ENCODE measurements at regions of chr3 and their contacts with region 1.

Region 1: DNA sequence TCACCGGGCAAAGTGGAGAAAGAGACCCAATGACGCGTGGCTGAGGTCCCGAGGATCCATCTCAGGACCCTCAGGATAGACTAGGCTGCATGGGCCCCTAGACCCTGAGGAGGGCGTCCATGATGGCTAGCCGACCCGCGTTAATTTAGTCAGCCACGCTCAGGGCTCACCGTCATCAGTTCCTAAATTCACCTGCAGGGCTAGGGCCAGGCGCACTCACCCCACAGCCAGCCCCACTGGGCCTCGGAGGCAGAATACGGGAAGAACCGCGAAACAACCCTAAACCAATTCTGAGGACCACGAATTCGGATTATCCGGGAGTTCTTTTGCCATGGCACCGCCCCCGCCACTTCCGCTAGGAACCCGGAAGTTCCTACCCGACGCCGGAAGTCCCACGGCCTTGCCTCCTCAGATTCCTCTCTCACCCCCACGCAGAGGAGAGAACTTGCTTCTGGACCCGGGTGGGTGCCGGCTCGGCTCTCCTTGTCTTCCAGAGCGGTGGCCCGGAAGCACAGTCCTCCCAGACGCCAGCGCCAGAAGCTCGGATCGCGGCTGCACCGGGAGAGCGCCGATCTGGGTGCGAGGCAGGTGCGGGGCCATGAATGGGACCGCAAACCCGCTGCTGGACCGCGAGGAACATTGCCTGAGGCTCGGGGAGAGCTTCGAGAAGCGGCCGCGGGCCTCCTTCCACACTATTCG is at the starts of genes EAF1 and METTL6:
- DNase-seq: peak; percentile 71 to 85 (median 84)
- ATAC-seq: peak; percentile 89
- H3K4me3 ChIP-seq: peak within 1 kb of the TSS; percentile 81
- H3K4me3 Mint-ChIP-seq: peak within 1 kb of the TSS; percentile 91 to 100 (median 98)
- H3K27ac ChIP-seq: peak within 1 kb of the TSS; percentile 91
- H3K27ac Mint-ChIP-seq: peak within 1 kb of the TSS; percentile 86 to 99 (median 94)
- H3K4me1 ChIP-seq: peaks cover 18 to 23% of the 10 kb centered on the region in 2 donors
- H3K4me1 Mint-ChIP-seq: peaks cover 47 to 82% (median 62%) of the 10 kb centered on the region in 7 donors
- H3K27me3 ChIP-seq: no peaks in the 10 kb centered on the region
- H3K27me3 Mint-ChIP-seq: no peaks in the 10 kb centered on the region
- total RNA-seq, gene EAF1: 17.8 to 61.9 (median 27.8) TPM
- total RNA-seq, gene METTL6: 7.9 to 23.0 (median 18.3) TPM

Region 2: DNA sequence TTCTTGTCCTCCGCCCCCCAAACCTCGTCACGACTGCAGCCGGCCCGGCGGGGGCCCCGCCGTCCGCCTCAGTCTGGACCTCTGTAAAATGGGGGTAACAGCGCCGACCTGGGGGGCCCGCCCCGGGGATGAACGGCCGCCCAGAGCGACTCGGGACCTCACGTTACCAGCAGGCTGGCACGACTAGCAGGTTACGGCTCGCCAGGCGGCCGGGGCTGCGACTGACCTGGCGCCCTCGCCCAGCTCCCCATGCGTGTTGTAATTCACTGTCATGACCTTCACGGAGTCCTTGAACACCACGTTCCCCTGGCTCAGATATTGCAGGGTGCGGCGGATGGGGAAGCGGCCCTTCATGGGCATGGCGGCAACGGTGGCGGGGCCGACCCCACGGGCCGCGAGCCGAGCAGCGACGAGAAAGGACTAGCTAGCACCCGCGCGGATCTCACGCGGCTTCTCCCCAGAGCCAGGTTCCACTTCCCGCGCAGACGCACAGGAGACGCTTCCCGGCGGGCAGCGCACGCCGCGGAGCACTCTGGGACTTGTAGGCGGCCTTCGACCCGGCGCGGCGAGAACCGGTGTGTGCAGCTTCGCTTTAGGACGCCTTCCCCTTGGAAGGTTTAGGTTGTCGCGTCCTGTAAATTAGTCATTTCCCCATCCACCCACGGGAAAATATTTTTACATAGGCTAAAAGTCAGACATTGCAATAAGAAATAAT is 362.3 kb before region 1 on chr3 and contains the start of gene MRPS25:
- CTCF ChIA-PET with region 1: no interaction called
- POLR2A ChIA-PET with region 1: no interaction called
- intact Hi-C with region 1: loop called in 1 of 2 experiments (anchors 1 kb)
- DNase-seq: peak; percentile 80 to 90 (median 87)
- ATAC-seq: peak; percentile 99
- H3K4me3 ChIP-seq: peak within 1 kb of the TSS; percentile 86
- H3K4me3 Mint-ChIP-seq: peak within 1 kb of the TSS; percentile 94 to 98 (median 96)
- H3K27ac ChIP-seq: peak within 1 kb of the TSS; percentile 87
- H3K27ac Mint-ChIP-seq: peak within 1 kb of the TSS; percentile 87 to 99 (median 94)
- H3K4me1 ChIP-seq: peaks cover 7 to 14% of the 10 kb centered on the region in 2 donors
- H3K4me1 Mint-ChIP-seq: peaks cover 16 to 29% (median 22%) of the 10 kb centered on the region in 7 donors
- H3K27me3 ChIP-seq: no peaks in the 10 kb centered on the region
- H3K27me3 Mint-ChIP-seq: no peaks in the 10 kb centered on the region
- total RNA-seq, gene MRPS25: 57.6 to 104 (median 76.0) TPM

Region 3: GRCh38 chr3:15467227-15468181 is 40.2 kb after region 1 on chr3:
- CTCF ChIA-PET with region 1: no interaction called
- POLR2A ChIA-PET with region 1: no interaction called
- intact Hi-C with region 1: no loop called
- DNase-seq: no peak
- ATAC-seq: peak; percentile 57
- H3K4me3 ChIP-seq: no peak overlapping the region
- H3K4me3 Mint-ChIP-seq: no peak overlapping the region
- H3K27ac ChIP-seq: no peak overlapping the region
- H3K27ac Mint-ChIP-seq: peak overlapping the region in 3 of 9 donors; percentile 18 to 64 (median 21)
- H3K4me1 ChIP-seq: peaks cover 0 to 25% of the 10 kb centered on the region in 2 donors
- H3K4me1 Mint-ChIP-seq: peaks cover 0 to 9% (median 4%) of the 10 kb centered on the region in 7 donors
- H3K27me3 ChIP-seq: no peaks in the 10 kb centered on the region
- H3K27me3 Mint-ChIP-seq: peaks cover 0 to 13% (median 0%) of the 10 kb centered on the region in 5 donors

Region 4: GRCh38 chr3:15535732-15536131 is 108.4 kb after region 1 on chr3:
- CTCF ChIA-PET with region 1: no interaction called
- POLR2A ChIA-PET with region 1: no interaction called
- intact Hi-C with region 1: loop called in 1 of 2 experiments (anchors 5 kb)
- DNase-seq: peak in 2 of 9 donors; percentile 5 to 55
- ATAC-seq: no peak
- H3K4me3 ChIP-seq: no peak overlapping the region
- H3K4me3 Mint-ChIP-seq: peak overlapping the region in 9 of 10 donors; percentile 14 to 76 (median 65)
- H3K27ac ChIP-seq: no peak overlapping the region
- H3K27ac Mint-ChIP-seq: peak overlapping the region; percentile 6 to 89 (median 78)
- H3K4me1 ChIP-seq: peaks cover 32 to 34% of the 10 kb centered on the region in 2 donors
- H3K4me1 Mint-ChIP-seq: peaks cover 27 to 59% (median 44%) of the 10 kb centered on the region in 7 donors
- H3K27me3 ChIP-seq: no peaks in the 10 kb centered on the region
- H3K27me3 Mint-ChIP-seq: no peaks in the 10 kb centered on the region

Region 5: DNA sequence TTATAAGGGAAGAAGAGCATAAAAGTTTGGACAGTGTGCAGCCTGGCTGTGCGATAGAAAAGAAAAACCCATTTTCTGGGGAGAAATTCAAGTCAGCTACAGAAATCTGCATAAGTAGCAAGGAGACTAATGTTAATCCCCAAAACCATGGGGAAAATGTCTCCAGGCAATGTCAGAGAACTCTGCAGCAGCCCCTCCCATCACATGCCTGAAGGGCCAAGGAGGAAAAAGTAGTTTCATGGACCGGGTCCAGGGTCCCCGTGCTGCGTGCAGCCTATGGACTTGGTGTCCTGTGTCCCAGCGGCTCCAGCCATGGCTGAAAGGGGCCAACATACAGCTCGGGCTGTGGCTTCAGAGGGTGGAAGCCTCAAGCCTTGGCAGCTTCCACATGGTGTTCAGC is 122.5 kb after region 1 on chr3:
- CTCF ChIA-PET with region 1: no interaction called
- POLR2A ChIA-PET with region 1: no interaction called
- intact Hi-C with region 1: no loop called
- DNase-seq: no peak
- ATAC-seq: no peak
- H3K4me3 ChIP-seq: no peak overlapping the region
- H3K4me3 Mint-ChIP-seq: no peak overlapping the region
- H3K27ac ChIP-seq: no peak overlapping the region
- H3K27ac Mint-ChIP-seq: no peak overlapping the region
- H3K4me1 ChIP-seq: no peaks in the 10 kb centered on the region
- H3K4me1 Mint-ChIP-seq: peaks cover 0 to 13% (median 0%) of the 10 kb centered on the region in 7 donors
- H3K27me3 ChIP-seq: no peaks in the 10 kb centered on the region
- H3K27me3 Mint-ChIP-seq: peaks cover 0 to 13% (median 0%) of the 10 kb centered on the region in 5 donors

Region 6: GRCh38 chr3:15797642-15798303 is 370.4 kb after region 1 on chr3 and contains the start of gene ANKRD28:
- CTCF ChIA-PET with region 1: no interaction called
- POLR2A ChIA-PET with region 1: no interaction called
- intact Hi-C with region 1: loop called in 1 of 2 experiments (anchors 5 kb)
- DNase-seq: peak in 5 of 9 donors; percentile 8 to 29 (median 20)
- ATAC-seq: peak; percentile 67
- H3K4me3 ChIP-seq: peak within 1 kb of the TSS; percentile 0
- H3K4me3 Mint-ChIP-seq: peak within 1 kb of the TSS in 9 of 10 donors; percentile 28 to 96 (median 57)
- H3K27ac ChIP-seq: no peak within 1 kb of the TSS
- H3K27ac Mint-ChIP-seq: peak within 1 kb of the TSS in 8 of 9 donors; percentile 2 to 97 (median 50)
- H3K4me1 ChIP-seq: peaks cover 26 to 38% of the 10 kb centered on the region in 2 donors
- H3K4me1 Mint-ChIP-seq: peaks cover 42 to 84% (median 76%) of the 10 kb centered on the region in 7 donors
- H3K27me3 ChIP-seq: no peaks in the 10 kb centered on the region
- H3K27me3 Mint-ChIP-seq: no peaks in the 10 kb centered on the region
- total RNA-seq, gene ANKRD28: 27.4 to 70.4 (median 43.2) TPM

Region 7: GRCh38 chr3:16174389-16174788 is 747.1 kb after region 1 on chr3 and contains the start of gene GALNT15:
- CTCF ChIA-PET with region 1: no interaction called
- POLR2A ChIA-PET with region 1: no interaction called
- intact Hi-C with region 1: no loop called
- DNase-seq: no peak
- ATAC-seq: no peak
- H3K4me3 ChIP-seq: no peak within 1 kb of the TSS
- H3K4me3 Mint-ChIP-seq: no peak within 1 kb of the TSS
- H3K27ac ChIP-seq: no peak within 1 kb of the TSS
- H3K27ac Mint-ChIP-seq: no peak within 1 kb of the TSS
- H3K4me1 ChIP-seq: no peaks in the 10 kb centered on the region
- H3K4me1 Mint-ChIP-seq: peaks cover 0 to 7% (median 5%) of the 10 kb centered on the region in 7 donors
- H3K27me3 ChIP-seq: no peaks in the 10 kb centered on the region
- H3K27me3 Mint-ChIP-seq: peaks cover 9 to 28% (median 19%) of the 10 kb centered on the region in 5 donors
- total RNA-seq, gene GALNT15: 0.46 TPM in 1 of 5 experiments, not detected in the others